Naive thymus-derived CD4-positive, alpha-beta T cell (primary cell): ENCODE measurements at regions of chr5 and their contacts with region 1.

Region 1: DNA sequence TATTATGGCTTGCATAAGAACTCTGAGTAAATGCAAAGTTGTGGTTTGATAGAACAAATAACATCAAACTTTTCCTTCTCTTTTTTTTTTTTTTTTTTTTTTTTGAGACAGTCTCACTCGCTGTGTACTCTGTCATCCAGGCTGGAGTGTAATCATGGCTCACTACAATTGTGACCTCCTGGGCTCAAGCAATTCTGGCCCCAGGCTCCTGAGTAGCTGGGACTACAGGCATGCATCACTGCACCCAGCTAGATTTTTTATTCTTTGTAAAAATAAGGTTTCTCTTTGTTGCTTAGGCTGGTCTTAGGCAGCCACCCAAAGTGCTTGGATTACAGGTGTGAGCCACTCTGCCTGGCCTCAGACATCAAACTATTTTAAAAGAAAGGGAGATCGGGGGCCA is 19.0 kb upstream of the PTGER4 start:
- DNase-seq: no peak
- ATAC-seq: no peak
- H3K4me3 ChIP-seq: no peak overlapping the region
- H3K4me3 Mint-ChIP-seq: no peak overlapping the region
- H3K27ac ChIP-seq: no peak overlapping the region
- H3K27ac Mint-ChIP-seq: no peak overlapping the region
- H3K4me1 ChIP-seq: peaks cover 0 to 2% of the 10 kb centered on the region in 2 donors
- H3K4me1 Mint-ChIP-seq: peaks cover 7 to 31% (median 21%) of the 10 kb centered on the region in 7 donors
- H3K27me3 ChIP-seq: no peaks in the 10 kb centered on the region
- H3K27me3 Mint-ChIP-seq: no peaks in the 10 kb centered on the region

Region 2: GRCh38 chr5:40672425-40672824 is 11.7 kb after region 1 on chr5:
- CTCF ChIA-PET with region 1: interaction called, 3 read pairs
- POLR2A ChIA-PET with region 1: interaction called, 23 read pairs
- intact Hi-C with region 1: loop called in 1 of 2 experiments (anchors 1 kb)
- DNase-seq: no peak
- ATAC-seq: peak; percentile 59
- H3K4me3 ChIP-seq: no peak overlapping the region
- H3K4me3 Mint-ChIP-seq: peak overlapping the region in 7 of 10 donors; percentile 1 to 49 (median 30)
- H3K27ac ChIP-seq: peak overlapping the region; percentile 48
- H3K27ac Mint-ChIP-seq: peak overlapping the region; percentile 74 to 91 (median 87)
- H3K4me1 ChIP-seq: peaks cover 29 to 71% of the 10 kb centered on the region in 2 donors
- H3K4me1 Mint-ChIP-seq: peaks cover 50 to 89% (median 87%) of the 10 kb centered on the region in 7 donors
- H3K27me3 ChIP-seq: no peaks in the 10 kb centered on the region
- H3K27me3 Mint-ChIP-seq: no peaks in the 10 kb centered on the region